Left colon (tissue), 2 donors: ENCODE measurements at regions of chr9 and their contacts with region 1.

Region 1: DNA sequence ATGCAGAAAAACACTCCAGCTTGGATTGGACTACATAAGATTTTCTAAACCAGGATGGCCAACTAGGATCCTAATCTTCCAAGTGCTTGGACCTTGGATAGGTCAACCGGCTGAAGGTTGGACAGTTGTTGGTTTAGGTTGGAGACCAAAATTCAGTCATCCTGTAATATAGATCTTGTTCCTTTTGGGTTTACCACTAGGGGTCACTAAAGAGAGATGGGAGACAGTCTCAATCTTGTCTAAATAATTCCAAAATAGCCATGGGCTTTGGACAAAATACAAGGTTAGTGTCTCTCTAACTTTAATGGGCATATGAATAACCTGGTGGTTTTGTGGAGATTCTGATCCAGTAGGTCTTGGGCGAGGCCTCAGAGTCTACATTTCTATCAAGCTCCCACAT is 148.7 kb upstream of the ERCC6L2 start:
- DNase-seq: no peak
- ATAC-seq: no peak

Region 2: DNA sequence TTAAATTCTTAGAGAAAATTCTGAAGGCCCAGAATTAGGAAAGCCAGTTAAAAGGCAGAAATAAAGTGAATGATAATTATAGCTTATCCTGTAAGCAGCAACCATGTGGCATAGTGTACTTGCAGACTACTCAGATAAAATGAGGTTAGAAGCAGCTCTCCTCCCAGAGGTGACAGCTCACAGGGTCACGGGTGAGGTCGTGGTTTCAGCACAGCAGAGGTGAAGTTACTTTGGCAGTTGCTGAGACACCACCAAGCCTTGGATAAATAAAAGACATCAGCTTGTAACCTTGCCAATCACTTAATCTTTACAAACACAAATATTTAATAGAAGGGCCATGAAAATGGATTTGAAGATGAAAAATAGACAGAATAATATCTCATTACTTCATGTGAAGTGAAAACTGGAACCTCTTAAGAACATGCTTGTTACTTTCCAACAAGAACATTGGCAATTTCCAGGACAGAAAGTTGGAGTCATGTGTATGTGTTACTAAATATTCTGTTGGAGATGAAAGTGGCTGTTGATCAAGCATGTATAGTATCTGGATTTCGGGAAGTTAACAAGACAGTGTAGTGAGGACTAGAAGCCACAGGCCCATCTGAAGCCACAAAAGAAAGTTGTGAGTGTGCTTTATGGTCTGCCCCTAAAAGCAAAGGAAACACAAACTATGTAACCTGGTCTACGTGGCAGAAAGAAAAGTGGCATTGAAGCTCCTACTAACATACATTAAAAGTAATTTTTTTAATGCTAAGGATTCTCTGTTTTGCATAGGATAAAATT is 283.1 kb after region 1 on chr9:
- intact Hi-C with region 1: loop called in 1 of 2 experiments (anchors 10 kb)
- DNase-seq: no peak
- ATAC-seq: peak; percentile 21

Region 3: GRCh38 chr9:96217754-96218693 is 491.3 kb after region 1 on chr9:
- intact Hi-C with region 1: loop called in 1 of 2 experiments (anchors 10 kb)
- DNase-seq: peak; percentile 44 to 83
- ATAC-seq: peak; percentile 94